Left cardiac atrium (tissue), 4 donors: ENCODE measurements at regions of chr1 and their contacts with region 1.

Region 1: DNA sequence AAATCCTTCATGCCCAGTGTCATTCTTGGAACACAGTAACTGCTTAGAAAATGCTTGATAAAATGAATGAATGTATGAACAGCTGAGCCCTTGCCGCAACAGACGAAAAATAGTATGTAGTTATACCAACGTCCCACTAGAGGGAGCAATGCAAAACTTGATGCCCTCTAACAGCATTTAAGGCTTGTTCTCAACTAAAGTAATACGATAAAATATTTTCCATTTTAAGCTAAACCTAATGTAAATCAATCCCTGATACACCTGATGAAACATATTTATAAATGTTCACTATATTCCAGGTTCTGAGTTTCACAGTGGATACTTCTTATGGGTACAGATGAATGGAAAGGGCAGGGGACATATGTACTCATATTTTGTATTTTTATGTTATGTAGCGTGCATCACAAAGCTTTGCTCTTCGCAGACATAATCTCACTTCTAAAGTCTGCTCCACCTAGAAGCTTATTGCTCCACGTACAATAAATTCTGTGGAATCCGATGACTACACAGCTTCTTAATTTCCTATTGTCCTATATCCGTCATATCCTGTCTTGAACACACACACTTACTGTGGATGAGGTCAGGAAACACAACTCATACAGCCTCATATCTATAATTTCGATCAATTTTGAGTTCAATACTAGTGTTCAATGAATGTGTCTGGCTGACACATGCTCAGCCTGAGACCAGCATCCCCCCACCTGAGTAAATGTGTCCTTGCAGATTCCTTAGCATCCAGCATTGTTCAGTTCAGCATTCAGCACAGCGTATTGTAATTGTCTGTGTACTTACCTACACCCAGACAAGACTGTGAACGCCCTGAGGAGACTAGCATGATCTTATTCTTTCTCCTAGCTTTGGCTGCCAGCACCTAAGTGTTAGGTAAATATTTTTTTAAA is 4.4 kb upstream of the UTP25 start:
- DNase-seq: no peak
- ATAC-seq: peak in 1 of 2 donors; percentile 36

Region 2: GRCh38 chr1:209784265-209785169 is 38.9 kb before region 1 on chr1 and contains the start of gene C1orf74:
- intact Hi-C with region 1: loop called in 1 of 2 experiments (anchors 5 kb)
- DNase-seq: peak; percentile 99
- ATAC-seq: peak; percentile 98 to 99
- total RNA-seq, gene C1orf74: 1.8 to 1.9 TPM